ENCODE measurements at regions of chr10 and their contacts with region 1.

Region 1: GRCh38 chr10:99620713-99621453 is 644 bp upstream of the SLC25A28 start:
- DNase-seq: peak; percentile 92
- H3K4me3 Mint-ChIP-seq: peak overlapping the region; percentile 84
- H3K27ac Mint-ChIP-seq: peak overlapping the region; percentile 93
- H3K4me1 Mint-ChIP-seq: peaks cover 40% of the 10 kb centered on the region
- H3K27me3 Mint-ChIP-seq: no peaks in the 10 kb centered on the region

Region 2: DNA sequence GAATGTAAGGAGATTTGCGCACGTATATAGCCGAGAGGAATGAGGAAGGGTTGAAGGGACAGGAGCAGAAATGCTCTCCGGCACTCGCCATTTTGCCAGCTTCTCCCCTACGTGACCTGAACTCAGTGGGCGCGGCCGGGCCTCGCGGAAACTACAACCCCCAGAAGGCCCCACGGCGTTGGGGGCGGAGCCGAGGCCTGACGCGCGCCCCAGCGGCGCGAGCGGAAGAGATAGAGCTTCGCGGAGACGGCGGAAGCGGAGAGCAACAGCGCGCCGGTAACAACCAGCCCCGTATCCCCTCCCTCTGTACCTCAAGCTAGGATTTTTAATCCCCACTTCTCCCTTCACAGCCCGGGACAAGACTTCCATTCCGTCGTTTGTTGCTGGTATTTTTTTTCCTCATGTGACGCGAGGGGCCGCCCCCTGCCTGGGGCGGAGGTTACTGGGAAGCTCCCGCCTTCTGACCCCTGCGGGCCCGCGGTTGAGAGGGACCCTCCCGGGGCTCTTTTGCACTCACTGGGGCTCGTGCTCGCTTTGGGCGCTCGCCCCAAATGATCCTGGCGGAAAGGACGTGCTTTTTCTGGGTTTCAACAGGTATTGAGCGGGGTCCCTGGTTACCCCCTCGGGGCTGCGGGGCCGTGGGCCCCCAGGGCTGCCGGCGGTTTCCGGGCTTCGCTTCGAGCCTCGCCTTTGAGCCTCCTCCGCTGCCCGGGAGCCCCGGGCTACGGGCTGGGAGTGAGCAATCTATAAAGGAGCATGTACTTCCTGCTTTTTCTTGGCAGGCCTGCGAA is 1486.3 kb before region 1 on chr10 and contains the start of gene R3HCC1L:
- CTCF ChIA-PET with region 1: no interaction called
- intact Hi-C with region 1: loop called (anchors 2 kb)
- DNase-seq: peak; percentile 94
- H3K4me3 Mint-ChIP-seq: peak within 1 kb of the TSS; percentile 89
- H3K27ac Mint-ChIP-seq: peak within 1 kb of the TSS; percentile 96
- H3K4me1 Mint-ChIP-seq: peaks cover 36% of the 10 kb centered on the region
- H3K27me3 Mint-ChIP-seq: no peaks in the 10 kb centered on the region
- total RNA-seq, gene R3HCC1L: 13.4 to 13.6 TPM

Region 3: GRCh38 chr10:99328579-99329523 is 292.0 kb before region 1 on chr10 and contains the start of gene CNNM1:
- CTCF ChIA-PET with region 1: no interaction called
- intact Hi-C with region 1: no loop called
- DNase-seq: peak; percentile 56
- H3K4me3 Mint-ChIP-seq: peak within 1 kb of the TSS; percentile 58
- H3K27ac Mint-ChIP-seq: no peak within 1 kb of the TSS
- H3K4me1 Mint-ChIP-seq: peaks cover 16% of the 10 kb centered on the region
- H3K27me3 Mint-ChIP-seq: peaks cover 30% of the 10 kb centered on the region
- total RNA-seq, gene CNNM1: 0.81 to 1.0 TPM

Region 4: DNA sequence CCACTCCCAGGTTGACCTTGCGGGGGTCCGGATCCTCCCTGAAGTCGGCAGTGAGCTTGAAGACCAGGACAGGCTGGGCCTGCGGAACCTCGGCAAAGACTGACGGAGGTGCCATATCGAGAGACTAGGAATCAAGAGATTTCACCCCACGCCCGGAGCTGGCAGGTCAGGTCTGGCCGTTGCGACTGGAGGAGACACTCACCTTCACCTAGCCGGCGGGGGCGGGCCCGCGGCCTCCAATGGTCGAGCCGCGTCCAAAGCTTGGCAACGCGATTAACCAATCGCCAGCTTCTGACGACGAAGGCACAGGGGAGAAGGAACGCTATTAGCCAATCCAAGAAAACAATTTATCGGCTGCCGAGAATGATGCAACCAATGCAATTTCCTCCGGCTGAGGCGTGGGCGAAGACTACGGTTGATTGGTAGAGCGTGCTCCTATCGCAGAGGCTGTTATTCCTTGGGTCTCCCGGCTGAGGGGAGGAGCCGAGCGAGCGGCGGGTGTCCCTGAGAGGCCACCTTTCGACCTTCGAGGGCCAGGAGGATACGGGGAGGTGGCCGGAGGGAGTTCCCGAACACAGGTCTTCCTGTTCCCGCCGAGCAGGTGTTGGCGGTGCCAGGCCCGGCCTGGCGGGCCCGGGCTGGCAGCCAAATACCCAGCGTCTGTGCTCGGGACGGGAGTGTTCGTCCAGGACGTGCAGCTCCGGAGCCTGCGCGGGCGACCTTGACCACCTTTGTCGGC is 190.3 kb before region 1 on chr10 and contains the start of gene GOT1:
- CTCF ChIA-PET with region 1: interaction called, 57 read pairs
- intact Hi-C with region 1: loop called (anchors 1 kb)
- DNase-seq: peak; percentile 99
- H3K4me3 Mint-ChIP-seq: peak within 1 kb of the TSS; percentile 95
- H3K27ac Mint-ChIP-seq: peak within 1 kb of the TSS; percentile 90
- H3K4me1 Mint-ChIP-seq: peaks cover 38% of the 10 kb centered on the region
- H3K27me3 Mint-ChIP-seq: no peaks in the 10 kb centered on the region
- total RNA-seq, gene GOT1: 62.6 to 67.3 TPM

Region 5: DNA sequence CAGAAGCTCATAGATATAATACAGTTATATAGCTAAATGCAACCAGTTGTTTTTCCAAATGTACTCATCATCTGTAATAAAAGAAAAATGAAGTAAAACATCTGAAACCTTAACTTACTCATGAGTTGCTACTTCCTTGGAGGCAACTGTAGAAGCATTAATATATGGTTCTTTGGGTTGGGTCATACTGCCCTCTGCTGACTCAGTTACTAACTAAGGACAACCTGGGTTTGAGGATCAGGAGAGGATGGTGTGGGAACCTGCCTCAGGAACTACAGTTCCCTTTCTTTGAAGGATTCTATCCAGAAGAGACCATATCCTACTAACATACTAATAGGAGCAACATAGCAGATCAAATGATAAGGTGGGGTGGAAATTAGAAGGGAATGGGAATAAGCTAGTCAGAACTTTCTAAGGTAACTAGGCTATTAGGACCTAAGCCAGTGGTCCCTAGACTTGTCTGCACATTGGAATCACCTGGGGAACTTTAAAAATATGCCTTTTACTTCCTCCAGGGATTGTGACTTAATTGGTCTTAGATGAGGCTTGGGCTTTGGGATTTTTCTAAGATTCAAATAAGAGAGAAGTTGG is 90.3 kb after region 1 on chr10:
- CTCF ChIA-PET with region 1: interaction called, 3 read pairs
- intact Hi-C with region 1: loop called (anchors 1 kb)
- DNase-seq: peak; percentile 66
- H3K4me3 Mint-ChIP-seq: no peak overlapping the region
- H3K27ac Mint-ChIP-seq: no peak overlapping the region
- H3K4me1 Mint-ChIP-seq: peaks cover 13% of the 10 kb centered on the region
- H3K27me3 Mint-ChIP-seq: no peaks in the 10 kb centered on the region

Region 6: GRCh38 chr10:99766302-99766681 is 145.4 kb after region 1 on chr10:
- CTCF ChIA-PET with region 1: no interaction called
- intact Hi-C with region 1: no loop called
- DNase-seq: no peak
- H3K4me3 Mint-ChIP-seq: no peak overlapping the region
- H3K27ac Mint-ChIP-seq: no peak overlapping the region
- H3K4me1 Mint-ChIP-seq: no peaks in the 10 kb centered on the region
- H3K27me3 Mint-ChIP-seq: no peaks in the 10 kb centered on the region

Region 7: GRCh38 chr10:100009793-100010676 is 389.2 kb after region 1 on chr10 and contains the start of gene DNMBP:
- CTCF ChIA-PET with region 1: no interaction called
- intact Hi-C with region 1: loop called (anchors 5 kb)
- DNase-seq: peak; percentile 82
- H3K4me3 Mint-ChIP-seq: peak within 1 kb of the TSS; percentile 85
- H3K27ac Mint-ChIP-seq: peak within 1 kb of the TSS; percentile 37
- H3K4me1 Mint-ChIP-seq: peaks cover 38% of the 10 kb centered on the region
- H3K27me3 Mint-ChIP-seq: peaks cover 7% of the 10 kb centered on the region
- total RNA-seq, gene DNMBP: 2.2 to 2.4 TPM

Region 8: GRCh38 chr10:100185364-100186252 is 564.7 kb after region 1 on chr10 and contains the start of gene ERLIN1:
- CTCF ChIA-PET with region 1: no interaction called
- intact Hi-C with region 1: loop called (anchors 5 kb)
- DNase-seq: peak; percentile 95
- H3K4me3 Mint-ChIP-seq: peak within 1 kb of the TSS; percentile 96
- H3K27ac Mint-ChIP-seq: peak within 1 kb of the TSS; percentile 95
- H3K4me1 Mint-ChIP-seq: peaks cover 58% of the 10 kb centered on the region
- H3K27me3 Mint-ChIP-seq: no peaks in the 10 kb centered on the region
- total RNA-seq, gene ERLIN1: 18.4 to 18.7 TPM

Region 9: DNA sequence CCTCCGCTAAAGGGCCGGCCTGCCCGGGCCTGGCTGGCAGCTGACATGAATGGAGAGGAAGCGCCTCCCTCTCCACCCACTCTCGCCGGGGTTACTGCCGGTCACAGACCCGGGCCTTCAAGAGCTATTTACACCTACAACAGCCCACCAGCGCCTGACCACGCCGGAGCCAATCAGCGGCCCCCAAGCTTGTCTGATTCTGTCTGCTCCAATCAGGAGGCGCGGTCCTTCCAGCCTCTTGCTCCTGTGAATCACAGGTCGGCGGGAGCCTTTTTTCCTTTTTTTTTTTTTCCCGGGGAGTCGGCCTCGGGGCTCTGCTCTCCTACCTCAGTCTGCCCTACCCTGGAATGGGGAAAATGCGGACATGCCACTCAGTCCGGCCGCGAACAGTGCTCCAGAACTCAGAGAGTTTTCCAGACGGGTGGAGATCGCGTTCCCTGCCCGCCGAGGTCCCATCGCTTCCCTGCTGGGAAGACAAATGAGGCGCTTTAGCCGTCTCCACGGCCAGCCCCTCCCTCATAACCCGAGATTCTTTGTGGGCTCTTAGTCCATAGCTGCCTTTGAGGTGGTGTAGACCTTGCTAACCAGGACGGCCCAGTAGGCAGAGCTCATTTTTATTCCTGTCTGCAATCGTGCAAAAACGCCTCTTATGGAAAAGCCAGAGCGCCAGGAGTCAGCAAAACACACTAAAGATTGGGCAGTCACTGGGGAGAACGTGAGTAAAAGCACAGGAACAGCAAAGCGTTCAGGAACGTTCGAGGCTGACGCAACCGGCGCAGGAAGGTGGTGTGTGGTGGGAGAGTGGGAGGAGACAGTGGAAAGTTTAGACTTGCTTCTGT is 752.6 kb after region 1 on chr10:
- CTCF ChIA-PET with region 1: no interaction called
- intact Hi-C with region 1: loop called (anchors 2 kb)
- DNase-seq: peak; percentile 99
- H3K4me3 Mint-ChIP-seq: no peak overlapping the region
- H3K27ac Mint-ChIP-seq: no peak overlapping the region
- H3K4me1 Mint-ChIP-seq: peaks cover 30% of the 10 kb centered on the region
- H3K27me3 Mint-ChIP-seq: no peaks in the 10 kb centered on the region